Activated CD8-positive, alpha-beta T cell treated with anti-CD3 and anti-CD28 coated beads for 36 hours (primary cell): ENCODE measurements at regions of chr1 and their contacts with region 1.

Region 1: GRCh38 chr1:203006948-203007871 is at the start of gene TMEM183A:
- DNase-seq: peak; percentile 97
- ATAC-seq: peak; percentile 93
- H3K4me3 Mint-ChIP-seq: peak within 1 kb of the TSS; percentile 83
- H3K27ac Mint-ChIP-seq: peak within 1 kb of the TSS; percentile 98
- H3K4me1 Mint-ChIP-seq: peaks cover 28% of the 10 kb centered on the region
- H3K27me3 Mint-ChIP-seq: no peaks in the 10 kb centered on the region
- CTCF ChIP-seq: no peak
- total RNA-seq, gene TMEM183A: 76.5 to 82.2 TPM

Region 2: GRCh38 chr1:202348509-202349205 is 658.6 kb before region 1 on chr1 and contains the start of gene PPP1R12B:
- CTCF ChIA-PET with region 1: no interaction called
- POLR2A ChIA-PET with region 1: interaction called, 3 read pairs
- intact Hi-C with region 1: loop called (anchors 10 kb)
- DNase-seq: peak; percentile 98
- ATAC-seq: peak; percentile 98
- H3K4me3 Mint-ChIP-seq: peak within 1 kb of the TSS; percentile 96
- H3K27ac Mint-ChIP-seq: peak within 1 kb of the TSS; percentile 91
- H3K4me1 Mint-ChIP-seq: peaks cover 28% of the 10 kb centered on the region
- H3K27me3 Mint-ChIP-seq: no peaks in the 10 kb centered on the region
- CTCF ChIP-seq: no peak
- total RNA-seq, gene PPP1R12B: 13.0 to 14.1 TPM

Region 3: DNA sequence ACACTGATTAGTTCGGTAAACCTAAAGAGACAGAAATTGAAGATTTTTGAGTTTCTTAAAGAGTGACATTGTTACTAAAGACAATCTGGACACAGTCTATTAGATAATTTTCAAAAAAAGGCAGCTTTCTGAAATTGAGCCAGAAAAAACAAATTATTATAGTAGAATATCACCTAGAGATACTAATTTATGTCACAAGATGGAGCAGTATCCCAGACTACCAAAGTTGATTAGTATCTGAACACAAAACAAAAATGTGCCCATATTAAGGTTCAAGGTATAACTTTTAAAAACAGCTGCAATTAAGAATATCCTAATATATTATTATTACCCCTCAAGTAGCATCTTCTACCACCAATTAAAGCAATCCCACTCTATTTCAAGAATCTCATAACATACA is 256.5 kb before region 1 on chr1:
- CTCF ChIA-PET with region 1: no interaction called
- POLR2A ChIA-PET with region 1: no interaction called
- intact Hi-C with region 1: loop called (anchors 10 kb)
- DNase-seq: no peak
- ATAC-seq: no peak
- H3K4me3 Mint-ChIP-seq: no peak overlapping the region
- H3K27ac Mint-ChIP-seq: no peak overlapping the region
- H3K4me1 Mint-ChIP-seq: no peaks in the 10 kb centered on the region
- H3K27me3 Mint-ChIP-seq: no peaks in the 10 kb centered on the region
- CTCF ChIP-seq: peak; percentile 17

Region 4: GRCh38 chr1:202926720-202927491 is 80.3 kb before region 1 on chr1 and contains the start of gene KLHL12:
- CTCF ChIA-PET with region 1: interaction called, 5 read pairs
- POLR2A ChIA-PET with region 1: interaction called, 14 read pairs
- intact Hi-C with region 1: no loop called
- DNase-seq: peak; percentile 97
- ATAC-seq: peak; percentile 97
- H3K4me3 Mint-ChIP-seq: peak within 1 kb of the TSS; percentile 91
- H3K27ac Mint-ChIP-seq: peak within 1 kb of the TSS; percentile 93
- H3K4me1 Mint-ChIP-seq: peaks cover 22% of the 10 kb centered on the region
- H3K27me3 Mint-ChIP-seq: no peaks in the 10 kb centered on the region
- CTCF ChIP-seq: peak; percentile 69
- total RNA-seq, gene KLHL12: 38.0 to 43.7 TPM

Region 5: DNA sequence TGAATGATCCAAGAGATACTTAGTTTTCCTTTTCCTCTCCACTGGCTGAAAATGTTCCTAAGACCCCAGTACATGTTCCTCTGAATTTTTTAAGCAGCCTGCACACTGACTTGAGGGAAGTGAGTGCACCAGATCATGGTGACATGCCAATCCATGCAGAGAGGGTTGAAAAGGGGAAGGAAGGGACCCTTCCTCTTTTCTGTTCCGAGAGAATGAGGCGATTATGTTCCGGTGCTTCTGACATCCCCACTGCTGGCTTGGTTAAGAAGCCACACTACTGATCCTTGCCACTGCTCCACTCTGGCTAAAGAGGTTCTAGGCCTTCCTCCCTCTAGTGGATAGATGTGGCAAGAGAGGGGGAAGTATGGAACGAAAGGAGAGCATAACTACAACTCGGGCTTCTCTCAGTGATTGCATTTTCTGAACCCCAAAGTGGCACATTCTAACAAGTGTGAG is 38.3 kb before region 1 on chr1:
- CTCF ChIA-PET with region 1: interaction called, 8 read pairs
- POLR2A ChIA-PET with region 1: interaction called, 13 read pairs
- intact Hi-C with region 1: no loop called
- DNase-seq: peak; percentile 56
- ATAC-seq: peak; percentile 56
- H3K4me3 Mint-ChIP-seq: no peak overlapping the region
- H3K27ac Mint-ChIP-seq: peak overlapping the region; percentile 8
- H3K4me1 Mint-ChIP-seq: peaks cover 27% of the 10 kb centered on the region
- H3K27me3 Mint-ChIP-seq: no peaks in the 10 kb centered on the region
- CTCF ChIP-seq: peak; percentile 49

Region 6: DNA sequence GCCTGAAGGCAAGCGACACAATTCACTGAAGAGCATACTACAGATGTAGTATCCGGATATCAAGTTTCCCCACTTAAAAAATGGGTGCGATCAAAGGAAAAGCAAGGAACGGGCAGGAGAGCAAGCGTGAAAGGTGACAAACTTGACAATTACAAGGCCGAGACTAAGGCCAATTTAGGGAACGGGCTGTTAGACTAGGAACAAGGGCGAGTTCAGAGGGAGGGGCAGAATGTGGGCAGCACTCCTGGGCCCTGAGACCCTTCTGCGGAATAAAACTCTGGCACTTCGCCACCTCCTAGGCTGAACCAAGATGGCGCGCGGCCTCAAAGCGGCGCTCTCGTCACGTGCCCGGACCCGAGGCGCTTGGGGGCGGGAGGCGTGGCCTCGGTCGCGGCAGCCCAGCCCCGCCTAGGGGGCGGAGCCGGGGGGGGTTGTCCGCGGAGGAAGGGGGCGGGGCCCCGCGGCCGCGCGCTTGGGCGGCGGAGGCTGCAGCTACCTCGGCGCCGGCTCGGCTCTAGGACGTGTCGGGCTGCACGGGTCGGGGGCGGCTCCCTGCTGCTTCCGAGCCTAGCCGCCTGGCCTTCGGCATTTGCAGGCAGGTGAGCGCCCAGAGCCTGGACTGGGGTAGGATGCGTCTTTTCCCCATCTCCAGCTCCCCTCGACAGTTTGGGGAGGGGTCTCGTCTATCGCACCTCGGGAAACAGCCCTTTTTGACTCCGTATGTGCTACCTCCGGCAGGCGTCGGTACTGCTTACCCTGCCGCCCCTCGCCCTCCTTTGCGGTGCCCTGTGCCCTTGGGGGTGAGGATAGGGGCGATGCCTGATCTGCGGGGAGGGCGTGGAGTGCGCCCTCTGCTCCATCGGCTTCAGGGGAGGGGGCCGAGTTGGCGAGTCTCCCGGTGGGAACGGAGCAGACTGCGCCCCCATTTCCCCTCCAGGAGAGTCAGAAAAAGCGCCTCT is 19.1 kb after region 1 on chr1 and contains the start of gene PPFIA4:
- CTCF ChIA-PET with region 1: interaction called, 6 read pairs
- POLR2A ChIA-PET with region 1: interaction called, 15 read pairs
- intact Hi-C with region 1: no loop called
- DNase-seq: peak; percentile 92
- ATAC-seq: peak; percentile 97
- H3K4me3 Mint-ChIP-seq: peak within 1 kb of the TSS; percentile 89
- H3K27ac Mint-ChIP-seq: peak within 1 kb of the TSS; percentile 82
- H3K4me1 Mint-ChIP-seq: peaks cover 17% of the 10 kb centered on the region
- H3K27me3 Mint-ChIP-seq: peaks cover 10% of the 10 kb centered on the region
- CTCF ChIP-seq: no peak
- total RNA-seq, gene PPFIA4: 78.8 to 79.9 TPM